Psoas muscle (tissue), 8 donors: ENCODE measurements at regions of chr16 and their contacts with region 1.

Region 1: DNA sequence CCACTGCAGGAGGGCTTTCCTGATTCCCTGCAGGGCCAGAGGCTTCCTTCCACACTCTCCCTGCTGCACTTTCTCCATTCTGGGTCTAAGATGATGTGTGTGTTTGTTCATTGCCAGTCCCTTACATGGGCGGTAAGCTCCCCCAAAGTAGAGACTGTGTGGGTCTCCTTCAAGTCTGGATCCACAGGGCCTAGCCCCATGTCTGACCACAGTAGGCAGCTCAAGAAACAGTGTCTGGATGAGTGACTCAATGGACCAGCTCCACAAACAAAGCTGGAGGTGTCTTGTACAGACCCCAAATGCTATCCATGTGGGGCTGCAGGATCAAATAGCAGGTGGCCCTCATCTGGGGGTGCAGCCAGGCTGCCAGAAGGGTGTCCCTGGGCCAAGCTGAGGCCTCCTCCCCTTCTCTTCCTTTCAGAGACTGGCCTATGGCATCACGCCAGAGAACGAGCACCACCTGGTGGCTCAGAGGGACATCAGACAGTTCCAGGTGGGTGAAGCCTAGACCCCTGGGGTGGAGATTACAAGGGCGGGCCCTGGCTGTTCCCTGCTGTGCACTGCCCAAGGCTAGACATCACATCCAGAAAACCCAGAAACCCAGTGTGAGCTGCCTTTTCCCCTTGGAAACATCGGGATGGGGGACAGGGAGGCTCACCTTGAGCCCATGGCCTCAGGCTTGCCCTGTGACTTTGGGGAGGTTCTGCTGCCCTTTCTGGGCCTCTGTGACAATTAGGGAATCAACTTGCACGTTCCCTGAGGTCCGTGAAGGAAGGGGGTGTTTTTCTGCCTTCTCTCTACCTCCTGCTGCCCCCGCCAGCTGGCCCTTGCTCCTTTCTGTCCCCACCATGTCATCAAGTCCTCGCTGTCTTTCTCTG is 45.9 kb downstream of the SLC6A2 start:
- DNase-seq: peak; percentile 58 to 69
- ATAC-seq: peak; percentile 53 to 82 (median 80)
- H3K4me3 ChIP-seq: no peak overlapping the region
- H3K27ac ChIP-seq: no peak overlapping the region
- H3K4me1 ChIP-seq: no peaks in the 10 kb centered on the region
- H3K27me3 ChIP-seq: no peaks in the 10 kb centered on the region
- CTCF ChIP-seq: peak; percentile 58

Region 2: GRCh38 chr16:55465077-55465896 is 236.4 kb before region 1 on chr16:
- intact Hi-C with region 1: loop called (anchors 1 to 2 kb)
- DNase-seq: peak; percentile 86 to 92
- ATAC-seq: peak; percentile 94 to 97 (median 96)
- H3K4me3 ChIP-seq: no peak overlapping the region
- H3K27ac ChIP-seq: no peak overlapping the region
- H3K4me1 ChIP-seq: no peaks in the 10 kb centered on the region
- H3K27me3 ChIP-seq: no peaks in the 10 kb centered on the region
- CTCF ChIP-seq: peak; percentile 100

Region 3: DNA sequence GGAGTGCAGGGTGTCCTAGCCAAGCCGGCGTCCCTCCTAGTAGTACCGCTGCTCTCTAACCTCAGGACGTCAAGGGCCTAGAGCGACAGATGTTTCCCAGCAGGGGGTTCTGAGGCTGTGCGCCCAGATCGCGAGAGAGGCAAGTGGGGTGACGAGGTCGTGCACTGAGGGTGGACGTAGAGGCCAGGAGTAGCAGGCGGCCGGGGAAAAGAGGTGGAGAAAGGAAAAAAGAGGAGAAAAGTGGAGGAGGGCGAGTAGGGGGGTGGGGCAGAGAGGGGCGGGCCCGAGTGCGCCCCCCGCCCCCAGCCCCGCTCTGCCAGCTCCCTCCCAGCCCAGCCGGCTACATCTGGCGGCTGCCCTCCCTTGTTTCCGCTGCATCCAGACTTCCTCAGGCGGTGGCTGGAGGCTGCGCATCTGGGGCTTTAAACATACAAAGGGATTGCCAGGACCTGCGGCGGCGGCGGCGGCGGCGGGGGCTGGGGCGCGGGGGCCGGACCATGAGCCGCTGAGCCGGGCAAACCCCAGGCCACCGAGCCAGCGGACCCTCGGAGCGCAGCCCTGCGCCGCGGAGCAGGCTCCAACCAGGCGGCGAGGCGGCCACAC is 222.8 kb before region 1 on chr16 and contains the start of gene MMP2:
- intact Hi-C with region 1: loop called in 1 of 2 experiments (anchors 5 kb)
- DNase-seq: peak; percentile 80 to 88
- ATAC-seq: peak; percentile 29 to 64 (median 51)
- H3K4me3 ChIP-seq: peak within 1 kb of the TSS; percentile 65
- H3K27ac ChIP-seq: peak within 1 kb of the TSS; percentile 55
- H3K4me1 ChIP-seq: peaks cover 9% of the 10 kb centered on the region
- H3K27me3 ChIP-seq: peaks cover 0 to 42% (median 12%) of the 10 kb centered on the region in 3 donors
- CTCF ChIP-seq: no peak
- total RNA-seq, gene MMP2: 21.7 to 60.9 (median 38.6) TPM

Region 4: DNA sequence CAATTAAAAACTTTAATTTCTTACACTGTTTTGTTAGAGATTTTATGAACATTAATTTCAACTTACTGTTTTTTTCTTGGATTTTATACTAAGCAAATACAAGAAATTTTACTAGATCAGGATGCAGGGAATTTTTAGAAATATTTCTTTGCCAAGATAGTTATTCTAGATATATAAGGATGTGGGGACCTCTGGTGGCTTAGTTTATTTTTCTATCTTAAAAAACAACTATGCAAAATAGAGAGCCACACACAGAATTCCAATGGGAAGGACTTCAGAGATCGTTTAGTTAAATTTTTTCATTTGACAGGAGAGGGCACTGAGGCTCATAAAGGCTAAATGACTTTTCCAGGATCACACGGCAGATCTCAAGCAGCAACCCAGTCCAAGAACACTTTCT is 158.2 kb before region 1 on chr16:
- intact Hi-C with region 1: loop called in 1 of 2 experiments (anchors 5 kb)
- DNase-seq: no peak
- ATAC-seq: peak in 1 of 4 donors; percentile 66
- H3K4me3 ChIP-seq: no peak overlapping the region
- H3K27ac ChIP-seq: no peak overlapping the region
- H3K4me1 ChIP-seq: no peaks in the 10 kb centered on the region
- H3K27me3 ChIP-seq: no peaks in the 10 kb centered on the region
- CTCF ChIP-seq: peak; percentile 53